ENCODE measurements at regions of chr1 and their contacts with region 1.

Region 1: DNA sequence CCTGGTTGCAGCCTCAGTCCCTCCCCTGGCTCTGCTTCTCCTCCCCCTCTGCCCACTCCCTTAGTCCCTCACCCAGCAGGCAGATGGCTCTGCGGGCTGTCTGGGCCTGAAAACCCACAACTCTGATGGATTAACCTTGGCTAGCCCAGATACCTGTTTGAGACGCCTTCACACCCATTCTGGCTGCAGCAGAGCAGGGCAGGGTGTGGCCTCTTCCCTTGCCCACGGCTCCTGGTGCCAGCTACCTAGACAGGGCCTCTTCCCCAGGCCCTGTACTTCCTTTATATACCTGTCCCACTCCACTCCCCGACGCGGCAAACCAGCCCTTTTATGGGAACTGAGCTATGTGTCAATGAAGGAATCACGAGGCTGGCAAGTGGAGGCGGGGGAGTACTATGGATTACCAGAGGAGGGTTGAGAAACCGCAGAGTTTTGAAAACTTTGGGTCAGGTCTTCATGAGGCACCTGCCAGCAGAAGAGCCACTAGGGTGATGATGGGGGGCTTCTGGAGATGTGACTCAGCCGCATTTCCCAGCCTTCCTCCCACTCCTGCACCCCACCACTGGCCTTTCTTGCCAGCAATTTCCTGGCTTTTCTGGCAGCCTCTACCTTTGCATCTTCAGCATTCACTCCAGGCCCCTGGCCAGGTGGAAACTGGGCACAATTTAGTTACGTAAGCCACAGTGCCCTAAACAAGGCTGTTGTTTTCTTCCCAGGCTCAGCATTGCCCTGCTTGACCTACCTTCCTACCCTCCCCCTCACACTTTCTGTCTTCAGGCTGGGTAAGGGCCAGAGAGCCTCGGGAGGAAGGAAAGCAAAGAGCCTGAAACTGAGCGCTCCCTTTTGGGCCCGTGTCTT is at the start of gene CHI3L1:
- DNase-seq: no peak
- H3K4me3 ChIP-seq: no peak within 1 kb of the TSS
- H3K27ac ChIP-seq: no peak within 1 kb of the TSS
- H3K4me1 ChIP-seq: no peaks in the 10 kb centered on the region
- H3K27me3 ChIP-seq: no peaks in the 10 kb centered on the region
- CTCF ChIP-seq: no peak
- total RNA-seq, gene CHI3L1: not detected in 2 replicates

Region 2: DNA sequence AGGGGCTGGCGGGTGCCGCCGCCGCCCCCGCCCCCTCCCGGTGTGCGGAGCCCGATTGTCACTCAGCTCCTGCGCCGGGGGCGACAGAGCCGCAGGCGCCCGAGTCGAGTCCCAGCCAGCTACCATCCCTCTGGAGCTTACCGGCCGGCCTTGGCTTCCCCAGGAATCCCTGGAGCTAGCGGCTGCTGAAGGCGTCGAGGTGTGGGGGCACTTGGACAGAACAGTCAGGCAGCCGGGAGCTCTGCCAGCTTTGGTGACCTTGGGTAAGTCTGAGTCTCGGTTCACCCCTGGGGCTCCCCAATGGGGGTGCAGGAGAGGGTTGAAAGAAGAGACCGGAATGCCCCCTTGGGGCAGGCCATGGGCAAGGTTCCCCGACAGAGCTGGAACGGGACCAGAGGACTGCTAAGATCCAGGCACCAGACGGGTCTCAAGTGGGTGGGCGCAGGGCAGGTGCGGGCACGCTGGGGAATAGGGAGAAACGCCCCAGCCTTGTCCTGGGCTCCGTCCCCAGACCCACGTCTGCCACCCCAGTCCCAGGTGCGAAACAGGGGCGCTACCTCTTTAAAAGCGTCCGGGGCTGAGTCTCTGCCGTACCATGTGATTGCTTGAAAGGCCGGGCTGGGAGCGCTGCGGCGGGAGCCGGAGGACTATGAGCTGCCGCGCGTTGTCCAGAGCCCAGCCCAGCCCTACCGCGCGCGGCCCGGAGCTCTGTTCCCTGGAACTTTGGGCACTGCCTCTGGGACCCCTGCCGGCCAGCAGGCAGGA is 58.8 kb before region 1 on chr1 and contains the start of gene ADORA1:
- CTCF ChIA-PET with region 1: interaction called, 11 read pairs
- POLR2A ChIA-PET with region 1: no interaction called
- intact Hi-C with region 1: no loop called
- DNase-seq: no peak
- H3K4me3 ChIP-seq: peak within 1 kb of the TSS; percentile 24
- H3K27ac ChIP-seq: no peak within 1 kb of the TSS
- H3K4me1 ChIP-seq: peaks cover 15% of the 10 kb centered on the region
- H3K27me3 ChIP-seq: peaks cover 23% of the 10 kb centered on the region
- CTCF ChIP-seq: 0 out of 2 replicates have a peak, but pooled peaks have one; percentile 5
- total RNA-seq, gene ADORA1: 0.74 and 1.2 TPM in 2 replicates

Measured in A673 (cell line).